ENCODE measurements at regions of chr16 and their contacts with region 1.

Region 1: GRCh38 chr16:47037746-47038458 is 64.4 kb upstream of the DNAJA2 start:
- DNase-seq: peak; percentile 92
- H3K4me3 Mint-ChIP-seq: peak overlapping the region; percentile 71
- H3K27ac Mint-ChIP-seq: no peak overlapping the region
- H3K4me1 Mint-ChIP-seq: peaks cover 6% of the 10 kb centered on the region
- H3K27me3 Mint-ChIP-seq: peaks cover 4% of the 10 kb centered on the region

Region 2: DNA sequence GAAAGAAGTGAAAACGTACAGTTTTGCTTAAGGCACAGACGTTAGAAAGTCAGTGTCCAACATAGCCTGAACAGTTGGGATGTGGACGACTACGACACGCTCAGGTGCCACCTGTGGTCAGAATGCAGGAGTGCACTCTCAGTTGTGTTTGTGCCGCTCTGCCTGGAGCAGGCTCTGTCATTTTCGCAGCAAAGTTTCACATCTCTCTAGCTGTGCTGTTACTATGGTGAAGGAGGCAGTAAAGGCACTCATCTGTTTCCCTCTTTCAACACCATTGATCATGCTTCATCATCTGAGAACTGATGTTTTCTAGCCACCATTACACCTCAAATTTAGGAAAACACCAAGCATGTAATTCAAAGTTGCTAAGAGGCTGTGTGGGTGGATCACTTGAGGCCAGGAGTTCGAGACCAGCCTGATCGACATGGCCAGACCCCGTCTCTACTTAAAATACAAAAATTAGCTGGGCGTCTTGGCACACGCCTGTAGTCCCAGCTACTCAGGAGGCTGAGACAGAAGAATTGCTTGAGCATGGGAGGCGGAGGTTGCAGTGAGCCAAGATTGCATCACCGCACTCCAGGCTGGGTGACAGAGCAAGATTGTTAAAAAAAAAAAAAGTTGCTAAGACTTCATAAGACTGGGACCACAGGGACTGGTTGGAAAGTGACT is 19.5 kb before region 1 on chr16:
- CTCF ChIA-PET with region 1: interaction called, 18 read pairs
- POLR2A ChIA-PET with region 1: no interaction called
- intact Hi-C with region 1: no loop called
- DNase-seq: peak; percentile 79
- H3K4me3 Mint-ChIP-seq: no peak overlapping the region
- H3K27ac Mint-ChIP-seq: no peak overlapping the region
- H3K4me1 Mint-ChIP-seq: peaks cover 19% of the 10 kb centered on the region
- H3K27me3 Mint-ChIP-seq: no peaks in the 10 kb centered on the region

Region 3: GRCh38 chr16:48164907-48165726 is 1127.2 kb after region 1 on chr16:
- CTCF ChIA-PET with region 1: interaction called, 31 read pairs
- POLR2A ChIA-PET with region 1: no interaction called
- intact Hi-C with region 1: no loop called
- DNase-seq: peak; percentile 80
- H3K4me3 Mint-ChIP-seq: no peak overlapping the region
- H3K27ac Mint-ChIP-seq: no peak overlapping the region
- H3K4me1 Mint-ChIP-seq: peaks cover 5% of the 10 kb centered on the region
- H3K27me3 Mint-ChIP-seq: peaks cover 6% of the 10 kb centered on the region

Measured in activated CD4-positive, alpha-beta memory T cell treated with anti-CD3 and anti-CD28 coated beads for 36 hours (primary cell).